Activated CD4-positive, alpha-beta memory T cell treated with anti-CD3 and anti-CD28 coated beads, Interleukin-2, amount 10 ng/mL, durations not matched to agents 7 days and 5 days (primary cell): ENCODE measurements at regions of chr5 and their contacts with region 1.

Region 1: GRCh38 chr5:112995764-112996618 is 19.4 kb downstream of the DCP2 start:
- DNase-seq: peak; percentile 80
- H3K4me3 Mint-ChIP-seq: no peak overlapping the region
- H3K27ac Mint-ChIP-seq: peak overlapping the region; percentile 12
- H3K4me1 Mint-ChIP-seq: peaks cover 14% of the 10 kb centered on the region
- H3K27me3 Mint-ChIP-seq: no peaks in the 10 kb centered on the region

Region 2: GRCh38 chr5:112976432-112977309 is 19.3 kb before region 1 on chr5 and contains the start of gene DCP2:
- CTCF ChIA-PET with region 1: interaction called, 13 read pairs
- POLR2A ChIA-PET with region 1: interaction called, 11 read pairs
- DNase-seq: peak; percentile 97
- H3K4me3 Mint-ChIP-seq: peak within 1 kb of the TSS; percentile 99
- H3K27ac Mint-ChIP-seq: peak within 1 kb of the TSS; percentile 96
- H3K4me1 Mint-ChIP-seq: peaks cover 46% of the 10 kb centered on the region
- H3K27me3 Mint-ChIP-seq: no peaks in the 10 kb centered on the region
- total RNA-seq, gene DCP2: 135 to 138 TPM

Region 3: DNA sequence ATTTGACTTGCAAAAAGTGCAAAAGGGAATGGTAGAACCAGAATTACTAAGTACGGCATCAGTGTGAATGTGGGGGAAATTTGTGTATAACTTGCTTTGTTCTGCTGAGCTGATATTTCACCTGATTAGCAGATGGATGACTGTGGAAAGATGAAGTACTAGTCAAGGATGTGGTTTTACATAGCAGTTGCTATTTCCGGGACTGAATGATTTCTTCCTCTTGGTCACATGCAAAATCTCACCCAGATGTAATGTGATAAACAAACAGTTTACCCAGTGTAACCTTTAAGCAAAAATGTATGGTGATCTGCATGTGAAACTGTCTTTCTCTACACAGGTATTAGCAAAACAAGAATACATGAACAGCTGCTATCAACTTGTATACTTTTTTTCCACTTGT is 26.7 kb after region 1 on chr5:
- CTCF ChIA-PET with region 1: interaction called, 18 read pairs
- POLR2A ChIA-PET with region 1: interaction called, 9 read pairs
- DNase-seq: no peak
- H3K4me3 Mint-ChIP-seq: peak overlapping the region; percentile 40
- H3K27ac Mint-ChIP-seq: peak overlapping the region; percentile 86
- H3K4me1 Mint-ChIP-seq: peaks cover 68% of the 10 kb centered on the region
- H3K27me3 Mint-ChIP-seq: no peaks in the 10 kb centered on the region

Region 4: GRCh38 chr5:113112435-113112834 is 116.4 kb after region 1 on chr5:
- CTCF ChIA-PET with region 1: no interaction called
- POLR2A ChIA-PET with region 1: no interaction called
- DNase-seq: no peak
- H3K4me3 Mint-ChIP-seq: no peak overlapping the region
- H3K27ac Mint-ChIP-seq: no peak overlapping the region
- H3K4me1 Mint-ChIP-seq: no peaks in the 10 kb centered on the region
- H3K27me3 Mint-ChIP-seq: no peaks in the 10 kb centered on the region

Region 5: GRCh38 chr5:113232667-113233066 is 236.7 kb after region 1 on chr5:
- CTCF ChIA-PET with region 1: no interaction called
- POLR2A ChIA-PET with region 1: no interaction called
- DNase-seq: no peak
- H3K4me3 Mint-ChIP-seq: no peak overlapping the region
- H3K27ac Mint-ChIP-seq: no peak overlapping the region
- H3K4me1 Mint-ChIP-seq: no peaks in the 10 kb centered on the region
- H3K27me3 Mint-ChIP-seq: peaks cover 17% of the 10 kb centered on the region

Region 6: DNA sequence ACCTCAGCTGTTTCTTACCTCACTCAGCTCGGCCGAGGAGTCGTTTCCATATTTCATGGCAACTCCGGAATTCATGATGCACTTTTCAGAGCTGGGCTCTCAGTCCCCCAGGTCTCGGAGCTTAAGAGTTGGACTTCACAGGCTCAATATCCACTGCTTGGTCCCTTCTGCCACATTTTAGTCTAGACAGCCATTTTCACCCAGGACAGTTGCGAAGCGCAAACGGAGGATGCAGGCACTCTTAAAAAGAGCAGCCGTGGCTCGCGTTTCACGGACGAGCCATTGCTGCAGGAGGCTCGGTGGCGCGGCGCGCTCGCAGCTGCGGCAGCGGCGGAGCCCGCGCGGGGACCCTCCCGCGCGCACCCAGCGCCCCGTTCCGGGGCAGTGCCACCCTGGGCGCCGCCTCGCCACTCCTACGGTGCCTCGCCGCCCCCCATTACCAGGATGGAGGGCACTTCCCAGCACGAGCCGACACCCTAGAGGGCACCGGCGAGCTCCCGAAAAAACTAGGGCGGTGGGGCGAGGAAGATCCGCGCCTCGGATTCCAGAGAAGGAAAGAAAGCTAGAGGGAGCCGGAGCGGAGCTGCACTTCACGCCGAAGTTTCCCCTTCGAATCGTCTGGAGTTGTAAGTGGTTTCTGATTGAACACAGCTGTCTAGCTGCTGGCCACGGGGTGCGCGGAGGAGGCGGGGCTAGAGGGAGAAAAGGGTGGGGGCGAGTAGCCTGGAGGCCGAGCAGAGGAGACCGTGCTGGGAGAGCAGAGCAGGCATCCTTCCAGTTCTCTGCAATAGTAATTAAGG is 298.5 kb after region 1 on chr5:
- CTCF ChIA-PET with region 1: interaction called, 16 read pairs
- POLR2A ChIA-PET with region 1: interaction called, 15 read pairs
- DNase-seq: peak; percentile 86
- H3K4me3 Mint-ChIP-seq: peak overlapping the region; percentile 93
- H3K27ac Mint-ChIP-seq: peak overlapping the region; percentile 79
- H3K4me1 Mint-ChIP-seq: peaks cover 27% of the 10 kb centered on the region
- H3K27me3 Mint-ChIP-seq: peaks cover 45% of the 10 kb centered on the region

Region 7: DNA sequence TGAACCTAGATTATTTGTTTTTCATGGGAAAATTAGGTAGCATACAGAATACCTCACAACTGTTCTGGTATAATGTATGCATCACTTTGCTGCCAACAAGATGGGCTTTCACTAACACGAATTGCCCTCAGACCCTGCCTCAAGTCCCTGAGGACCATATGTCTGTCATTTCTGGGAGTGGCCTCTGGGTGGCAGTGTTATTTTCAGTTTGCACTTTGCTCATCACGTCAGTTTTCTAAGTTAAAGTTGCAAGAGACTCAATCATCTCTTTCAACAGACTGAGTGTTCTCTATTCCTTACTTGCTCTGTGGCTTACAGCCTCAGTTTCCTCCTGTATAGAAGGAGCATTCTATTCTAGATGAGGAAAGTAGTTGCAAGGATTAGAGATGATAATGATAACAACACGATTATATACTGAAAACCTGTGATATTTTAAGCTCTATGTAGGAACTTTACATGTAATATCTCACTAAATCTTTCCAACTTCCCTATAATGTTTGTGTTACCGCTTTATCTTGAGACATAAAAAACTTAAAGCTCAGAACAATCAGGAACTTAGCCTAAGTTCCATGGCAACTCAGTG is 383.1 kb after region 1 on chr5:
- CTCF ChIA-PET with region 1: interaction called, 10 read pairs
- POLR2A ChIA-PET with region 1: no interaction called
- DNase-seq: peak; percentile 65
- H3K4me3 Mint-ChIP-seq: peak overlapping the region; percentile 2
- H3K27ac Mint-ChIP-seq: peak overlapping the region; percentile 44
- H3K4me1 Mint-ChIP-seq: peaks cover 46% of the 10 kb centered on the region
- H3K27me3 Mint-ChIP-seq: no peaks in the 10 kb centered on the region

Region 8: DNA sequence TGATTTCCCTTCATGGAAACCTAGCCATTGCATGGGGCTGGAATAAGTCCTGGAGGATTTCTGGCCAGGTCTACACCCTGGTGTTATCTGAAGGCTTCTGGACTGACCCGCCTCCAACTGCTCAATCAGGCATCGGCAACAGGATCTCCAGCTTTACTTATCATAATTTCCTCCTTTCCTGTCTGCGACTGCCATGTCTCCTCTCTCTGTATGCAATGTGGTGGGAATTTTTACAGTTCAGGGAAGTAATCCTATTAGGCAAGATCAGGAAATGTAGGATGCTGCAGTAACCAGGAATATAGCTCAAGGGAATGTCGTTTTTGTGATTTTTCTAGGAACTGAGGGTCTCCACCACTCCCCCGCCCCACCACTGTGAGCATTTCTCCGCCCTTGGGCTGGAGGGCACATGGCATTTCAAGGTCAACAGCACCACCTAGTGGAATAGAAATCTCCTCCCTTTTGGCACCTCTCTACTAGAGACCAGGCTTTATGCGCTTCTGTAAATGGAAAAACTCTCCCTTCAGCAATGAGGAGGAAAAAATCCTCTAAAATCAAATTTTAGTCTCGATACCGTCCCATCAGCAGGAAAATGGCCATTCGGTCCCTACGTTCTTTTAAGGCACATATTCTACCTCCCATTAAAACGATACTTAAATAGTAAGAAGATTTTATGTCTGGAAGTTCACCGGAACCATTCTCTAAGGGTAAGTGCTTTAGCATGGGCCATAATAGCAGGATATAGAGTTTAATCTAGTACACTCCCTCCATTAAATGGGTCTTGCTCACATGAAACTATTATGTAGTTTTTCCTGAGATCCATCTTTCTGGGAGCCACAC is 610.5 kb after region 1 on chr5:
- CTCF ChIA-PET with region 1: interaction called, 29 read pairs
- POLR2A ChIA-PET with region 1: no interaction called
- DNase-seq: peak; percentile 53
- H3K4me3 Mint-ChIP-seq: no peak overlapping the region
- H3K27ac Mint-ChIP-seq: no peak overlapping the region
- H3K4me1 Mint-ChIP-seq: peaks cover 17% of the 10 kb centered on the region
- H3K27me3 Mint-ChIP-seq: peaks cover 32% of the 10 kb centered on the region